Common myeloid progenitor, CD34-positive (primary cell): ENCODE measurements at regions of chr3 and their contacts with region 1.

Region 1: GRCh38 chr3:127822698-127823425 is 547 bp upstream of the MGLL start:
- DNase-seq: peak; percentile 47 to 76 (median 71)
- H3K4me3 ChIP-seq: peak overlapping the region; percentile 69 to 92 (median 89)
- H3K27ac ChIP-seq: peak overlapping the region; percentile 50 to 81
- H3K4me1 ChIP-seq: peaks cover 11 to 57% (median 43%) of the 10 kb centered on the region in 4 experiments
- H3K27me3 ChIP-seq: no peaks in the 10 kb centered on the region

Region 2: GRCh38 chr3:127697551-127698240 is 125.2 kb before region 1 on chr3:
- CTCF ChIA-PET with region 1: interaction called, 15 read pairs
- POLR2A ChIA-PET with region 1: no interaction called
- DNase-seq: peak; percentile 55 to 74 (median 73)
- H3K4me3 ChIP-seq: no peak overlapping the region
- H3K27ac ChIP-seq: no peak overlapping the region
- H3K4me1 ChIP-seq: peaks cover 0 to 29% (median 20%) of the 10 kb centered on the region in 4 experiments
- H3K27me3 ChIP-seq: no peaks in the 10 kb centered on the region

Region 3: GRCh38 chr3:127750226-127751031 is 72.4 kb before region 1 on chr3:
- CTCF ChIA-PET with region 1: interaction called, 22 read pairs
- POLR2A ChIA-PET with region 1: interaction called, 7 read pairs
- DNase-seq: peak in 2 of 3 donors; percentile 89 to 91
- H3K4me3 ChIP-seq: peak overlapping the region in 1 of 7 experiments; percentile 1
- H3K27ac ChIP-seq: no peak overlapping the region
- H3K4me1 ChIP-seq: peaks cover 0 to 56% (median 50%) of the 10 kb centered on the region in 4 experiments
- H3K27me3 ChIP-seq: no peaks in the 10 kb centered on the region

Region 4: DNA sequence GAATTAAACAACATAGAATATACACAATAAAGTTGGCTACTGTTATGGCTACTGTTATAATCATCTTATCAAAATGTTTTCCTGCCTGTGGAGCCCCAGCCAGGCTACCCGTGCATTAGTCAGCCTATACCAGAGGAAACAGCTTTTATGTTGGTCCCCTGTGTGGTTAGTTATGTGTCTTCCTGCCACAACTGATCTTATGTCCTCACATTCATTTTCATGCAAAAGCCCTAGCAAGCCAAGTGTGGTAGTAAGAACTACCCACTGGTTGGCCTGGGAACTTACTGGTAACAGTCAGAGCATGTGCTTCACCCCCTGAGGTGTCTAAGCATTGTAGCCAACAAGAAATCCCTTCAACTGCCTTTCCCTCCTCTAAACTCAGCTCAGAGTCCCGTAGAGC is 22.4 kb before region 1 on chr3:
- CTCF ChIA-PET with region 1: interaction called, 50 read pairs
- POLR2A ChIA-PET with region 1: interaction called, 4 read pairs
- DNase-seq: peak; percentile 83 to 98 (median 96)
- H3K4me3 ChIP-seq: peak overlapping the region in 1 of 7 experiments; percentile 41
- H3K27ac ChIP-seq: peak overlapping the region; percentile 89 to 90
- H3K4me1 ChIP-seq: peaks cover 17 to 81% (median 69%) of the 10 kb centered on the region in 4 experiments
- H3K27me3 ChIP-seq: no peaks in the 10 kb centered on the region

Region 5: GRCh38 chr3:127929824-127930413 is 107.1 kb after region 1 on chr3:
- CTCF ChIA-PET with region 1: no interaction called
- POLR2A ChIA-PET with region 1: no interaction called
- DNase-seq: no peak
- H3K4me3 ChIP-seq: no peak overlapping the region
- H3K27ac ChIP-seq: no peak overlapping the region
- H3K4me1 ChIP-seq: peaks cover 0 to 15% (median 8%) of the 10 kb centered on the region in 4 experiments
- H3K27me3 ChIP-seq: no peaks in the 10 kb centered on the region

Region 6: GRCh38 chr3:128051837-128052594 is 229.2 kb after region 1 on chr3 and contains the start of gene SEC61A1:
- CTCF ChIA-PET with region 1: no interaction called
- POLR2A ChIA-PET with region 1: no interaction called
- DNase-seq: peak; percentile 91 to 96 (median 95)
- H3K4me3 ChIP-seq: peak within 1 kb of the TSS; percentile 85 to 99 (median 95)
- H3K27ac ChIP-seq: peak within 1 kb of the TSS; percentile 86 to 96
- H3K4me1 ChIP-seq: peaks cover 18 to 32% (median 26%) of the 10 kb centered on the region in 4 experiments
- H3K27me3 ChIP-seq: no peaks in the 10 kb centered on the region

Region 7: GRCh38 chr3:128297401-128298138 is 474.7 kb after region 1 on chr3:
- CTCF ChIA-PET with region 1: no interaction called
- POLR2A ChIA-PET with region 1: no interaction called
- DNase-seq: peak in 2 of 3 donors; percentile 13 to 16
- H3K4me3 ChIP-seq: no peak overlapping the region
- H3K27ac ChIP-seq: no peak overlapping the region
- H3K4me1 ChIP-seq: peaks cover 0 to 7% (median 0%) of the 10 kb centered on the region in 4 experiments
- H3K27me3 ChIP-seq: no peaks in the 10 kb centered on the region